ENCODE measurements at regions of chr1 and their contacts with region 1.

Region 1: DNA sequence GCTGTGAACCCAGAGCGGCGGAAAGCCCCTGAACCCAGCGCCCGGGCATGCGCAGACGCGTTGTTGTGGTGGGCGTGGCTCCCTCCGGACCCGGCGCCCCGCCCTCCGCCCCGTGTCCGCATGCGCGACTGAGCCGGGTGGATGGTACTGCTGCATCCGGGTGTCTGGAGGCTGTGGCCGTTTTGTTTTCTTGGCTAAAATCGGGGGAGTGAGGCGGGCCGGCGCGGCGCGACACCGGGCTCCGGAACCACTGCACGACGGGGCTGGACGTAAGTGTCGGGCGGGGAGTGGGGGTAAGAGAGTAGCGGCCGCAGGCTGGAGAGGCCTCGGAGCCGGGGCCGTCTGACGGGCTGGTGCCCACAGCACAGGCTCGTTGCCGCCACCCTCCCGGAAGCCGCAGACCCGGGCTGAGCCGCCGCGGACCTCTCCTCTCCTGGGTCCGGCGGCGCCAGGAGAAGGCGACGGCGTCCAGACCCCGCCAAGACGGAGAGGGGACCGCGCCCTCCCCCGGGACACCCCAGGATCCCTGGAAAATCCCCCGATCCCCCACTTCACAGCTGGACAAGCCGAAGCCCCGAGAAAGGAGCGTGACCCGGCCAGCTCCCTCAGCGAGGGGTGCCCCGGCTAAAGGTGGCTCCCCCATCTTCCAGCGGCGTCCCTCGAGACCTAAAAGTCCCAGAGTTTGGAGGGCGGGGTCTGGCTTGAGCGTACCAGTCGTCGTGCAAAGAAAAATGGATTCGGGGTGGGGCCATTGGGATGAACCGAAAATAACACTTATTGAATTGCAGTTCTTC is at the start of gene TMEM50A:
- DNase-seq: peak; percentile 95
- ATAC-seq: peak; percentile 98
- total RNA-seq, gene TMEM50A: 70.5 TPM

Region 2: GRCh38 chr1:25134801-25135461 is 203.5 kb before region 1 on chr1:
- intact Hi-C with region 1: no loop called
- DNase-seq: no peak
- ATAC-seq: no peak

Region 3: GRCh38 chr1:25247024-25247828 is 91.2 kb before region 1 on chr1 and contains the start of gene RSRP1:
- intact Hi-C with region 1: loop called (anchors 5 kb)
- DNase-seq: peak; percentile 100
- ATAC-seq: peak; percentile 97
- total RNA-seq, gene RSRP1: 41.4 TPM

Measured in Right ventricle myocardium inferior (tissue), 1 donor.